OCI-LY7 (cell line): ENCODE measurements at regions of chr2 and their contacts with region 1.

Region 1: GRCh38 chr2:157492189-157492773 is 48.4 kb upstream of the CYTIP start:
- DNase-seq: peak; percentile 82
- H3K4me3 ChIP-seq: no peak overlapping the region
- H3K27ac ChIP-seq: no peak overlapping the region
- H3K4me1 ChIP-seq: peaks cover 4% of the 10 kb centered on the region
- CTCF ChIP-seq: peak; percentile 96

Region 2: GRCh38 chr2:157302492-157303099 is 189.7 kb before region 1 on chr2:
- CTCF ChIA-PET with region 1: interaction called, 9 read pairs
- POLR2A ChIA-PET with region 1: no interaction called
- intact Hi-C with region 1: loop called (anchors 5 kb)
- DNase-seq: peak; percentile 67
- H3K4me3 ChIP-seq: no peak overlapping the region
- H3K27ac ChIP-seq: no peak overlapping the region
- H3K4me1 ChIP-seq: no peaks in the 10 kb centered on the region
- CTCF ChIP-seq: peak; percentile 98

Region 3: GRCh38 chr2:157327621-157328500 is 164.4 kb before region 1 on chr2:
- CTCF ChIA-PET with region 1: interaction called, 4 read pairs
- POLR2A ChIA-PET with region 1: no interaction called
- intact Hi-C with region 1: loop called (anchors 5 kb)
- DNase-seq: peak; percentile 84
- H3K4me3 ChIP-seq: no peak overlapping the region
- H3K27ac ChIP-seq: no peak overlapping the region
- H3K4me1 ChIP-seq: peaks cover 15% of the 10 kb centered on the region
- CTCF ChIP-seq: peak; percentile 97

Region 4: DNA sequence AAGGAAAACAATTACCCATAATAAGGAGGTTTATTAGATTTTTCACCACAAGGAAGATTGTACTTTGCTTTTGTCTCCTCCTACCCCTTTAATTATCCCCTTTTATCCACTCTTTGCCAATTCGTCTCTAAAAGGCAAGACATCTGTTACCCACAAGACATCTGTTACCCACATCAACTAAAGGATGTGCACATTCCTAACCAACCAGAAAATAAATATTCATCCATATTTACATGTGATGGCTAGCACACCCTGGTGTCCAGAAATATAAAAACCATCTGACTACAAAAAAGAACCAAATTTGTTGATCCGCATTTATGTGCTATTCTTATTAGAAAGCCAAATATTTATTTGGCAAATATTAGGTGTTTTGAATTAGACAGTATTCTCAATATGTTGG is 100.7 kb after region 1 on chr2:
- CTCF ChIA-PET with region 1: no interaction called
- POLR2A ChIA-PET with region 1: no interaction called
- intact Hi-C with region 1: loop called (anchors 5 kb)
- DNase-seq: peak; percentile 35
- H3K4me3 ChIP-seq: no peak overlapping the region
- H3K27ac ChIP-seq: no peak overlapping the region
- H3K4me1 ChIP-seq: no peaks in the 10 kb centered on the region
- CTCF ChIP-seq: peak; percentile 65

Region 5: DNA sequence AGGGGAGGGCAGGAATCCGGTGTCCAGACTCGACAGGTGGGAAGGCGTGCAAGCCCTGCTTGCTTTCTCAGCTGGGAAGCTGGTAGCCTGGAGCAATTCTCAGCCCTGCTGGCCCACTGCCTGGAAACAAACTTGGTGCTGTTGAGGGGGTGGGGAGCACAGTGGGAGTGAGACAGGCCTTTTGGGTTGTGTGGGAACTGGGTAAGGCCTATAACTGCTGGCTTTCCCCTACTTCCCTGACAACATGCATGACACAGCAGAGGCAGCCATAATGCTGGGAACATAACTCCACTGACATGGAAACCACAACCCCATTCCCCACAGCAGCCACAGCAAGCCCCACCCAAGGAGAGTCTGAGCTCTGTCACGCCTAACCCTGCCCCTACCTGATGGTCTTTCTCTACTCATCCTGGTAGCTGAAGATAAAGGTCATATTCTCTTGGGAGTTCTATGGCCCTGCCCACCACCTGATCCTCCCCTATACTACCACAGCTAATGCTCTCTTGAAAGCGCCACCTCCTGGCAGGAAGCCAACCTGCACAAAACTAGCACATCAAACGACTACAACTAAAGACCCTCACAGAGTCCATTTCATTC is 259.3 kb after region 1 on chr2:
- CTCF ChIA-PET with region 1: no interaction called
- POLR2A ChIA-PET with region 1: no interaction called
- intact Hi-C with region 1: loop called (anchors 2 kb)
- DNase-seq: peak; percentile 45
- H3K4me3 ChIP-seq: no peak overlapping the region
- H3K27ac ChIP-seq: no peak overlapping the region
- H3K4me1 ChIP-seq: no peaks in the 10 kb centered on the region
- CTCF ChIP-seq: peak; percentile 80

Region 6: DNA sequence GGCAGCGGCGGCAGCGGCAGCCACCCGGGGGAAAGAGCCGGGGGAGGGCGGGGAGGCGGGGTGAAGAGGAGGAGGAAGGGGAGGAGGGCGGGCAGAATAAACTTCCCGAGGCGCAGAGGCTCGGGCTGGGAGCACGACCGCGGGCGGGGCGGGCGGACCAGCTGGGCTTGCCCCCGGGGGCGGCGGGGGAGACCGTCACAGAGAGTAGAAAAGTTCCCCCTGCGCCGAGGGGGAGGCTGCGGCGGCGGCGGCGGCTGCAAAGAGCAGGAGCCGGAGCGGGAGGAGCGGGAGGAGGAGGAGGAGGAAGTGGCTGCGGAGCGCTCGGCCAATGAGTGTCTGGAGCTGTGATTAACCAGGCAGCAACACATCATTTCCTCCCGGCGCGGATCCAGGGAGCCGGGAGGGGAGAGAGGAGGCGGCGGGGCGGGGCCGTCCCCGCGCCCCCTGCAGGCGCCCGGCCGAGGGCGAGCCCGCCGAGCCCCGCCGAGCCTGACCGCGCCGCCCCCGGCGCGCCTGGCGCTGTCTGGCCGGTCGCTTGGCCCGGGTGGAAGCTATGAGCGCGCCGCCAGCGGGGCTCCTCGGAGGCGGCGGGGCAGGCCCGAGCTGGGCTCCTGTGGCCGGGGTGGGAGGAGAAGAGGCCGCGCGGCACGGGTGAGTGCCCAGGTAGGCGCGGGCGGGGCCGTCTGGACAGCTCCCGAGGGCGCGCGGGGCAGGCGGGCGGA is 383.9 kb after region 1 on chr2 and contains the start of gene ACVR1:
- CTCF ChIA-PET with region 1: no interaction called
- POLR2A ChIA-PET with region 1: no interaction called
- intact Hi-C with region 1: loop called (anchors 10 kb)
- DNase-seq: peak; percentile 87
- H3K4me3 ChIP-seq: peak within 1 kb of the TSS; percentile 85
- H3K27ac ChIP-seq: no peak within 1 kb of the TSS
- H3K4me1 ChIP-seq: peaks cover 15% of the 10 kb centered on the region
- CTCF ChIP-seq: no peak; the same call in 1 of the 2 replicates
- total RNA-seq, gene ACVR1: 0.13 and 1.6 TPM in 2 replicates

Region 7: GRCh38 chr2:158006961-158007719 is 514.9 kb after region 1 on chr2:
- CTCF ChIA-PET with region 1: no interaction called
- POLR2A ChIA-PET with region 1: no interaction called
- intact Hi-C with region 1: loop called (anchors 2 kb)
- DNase-seq: no peak
- H3K4me3 ChIP-seq: no peak overlapping the region
- H3K27ac ChIP-seq: no peak overlapping the region
- H3K4me1 ChIP-seq: no peaks in the 10 kb centered on the region
- CTCF ChIP-seq: no peak; the same call in 1 of the 2 replicates